HCT116 (cell line): ENCODE measurements at regions of chr14 and their contacts with region 1.

Region 1: GRCh38 chr14:59055439-59056045 is 132.9 kb upstream of the DAAM1 start:
- DNase-seq: peak; percentile 13
- ATAC-seq: peak; percentile 95
- H3K4me3 ChIP-seq: no peak overlapping the region
- H3K27ac ChIP-seq: no peak overlapping the region
- H3K4me1 ChIP-seq: no peaks in the 10 kb centered on the region
- H3K27me3 ChIP-seq: no peaks in the 10 kb centered on the region
- CTCF ChIP-seq: peak; percentile 49 to 76 (median 69); a peak in 5 of 6 replicates
- POLR2A ChIP-seq: no peak
- RAD21 ChIP-seq: peak; percentile 77

Region 2: DNA sequence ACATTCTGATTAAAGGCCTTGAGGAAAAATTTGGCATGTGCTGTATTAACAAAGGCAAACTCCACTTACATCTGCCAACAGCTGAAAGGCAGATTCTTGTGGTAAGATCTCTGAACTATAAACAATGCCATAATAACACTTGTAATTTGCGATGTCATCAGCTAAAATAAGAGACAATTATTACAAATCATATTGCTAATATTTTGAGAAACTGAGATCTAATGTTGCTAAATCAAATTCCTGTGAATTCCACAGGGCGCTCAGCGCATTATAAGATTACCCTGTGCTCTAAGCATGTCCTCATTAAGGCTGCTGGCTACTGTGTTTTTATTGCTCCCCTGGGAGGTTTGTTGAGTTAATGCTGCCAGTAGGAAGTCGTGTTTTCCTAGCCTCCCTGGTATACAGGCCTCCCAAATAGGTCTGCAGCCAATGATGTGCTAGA is 172.9 kb before region 1 on chr14:
- CTCF ChIA-PET with region 1: no interaction called
- POLR2A ChIA-PET with region 1: no interaction called
- RAD21 ChIA-PET with region 1: no interaction called
- intact Hi-C with region 1: no loop called
- DNase-seq: no peak
- ATAC-seq: no peak
- H3K4me3 ChIP-seq: no peak overlapping the region
- H3K27ac ChIP-seq: no peak overlapping the region
- H3K4me1 ChIP-seq: peaks cover 3 to 7% of the 10 kb centered on the region in 2 experiments; a peak in 3 of 4 replicates
- H3K27me3 ChIP-seq: no peaks in the 10 kb centered on the region
- CTCF ChIP-seq: no peak
- POLR2A ChIP-seq: no peak
- RAD21 ChIP-seq: no peak

Region 3: DNA sequence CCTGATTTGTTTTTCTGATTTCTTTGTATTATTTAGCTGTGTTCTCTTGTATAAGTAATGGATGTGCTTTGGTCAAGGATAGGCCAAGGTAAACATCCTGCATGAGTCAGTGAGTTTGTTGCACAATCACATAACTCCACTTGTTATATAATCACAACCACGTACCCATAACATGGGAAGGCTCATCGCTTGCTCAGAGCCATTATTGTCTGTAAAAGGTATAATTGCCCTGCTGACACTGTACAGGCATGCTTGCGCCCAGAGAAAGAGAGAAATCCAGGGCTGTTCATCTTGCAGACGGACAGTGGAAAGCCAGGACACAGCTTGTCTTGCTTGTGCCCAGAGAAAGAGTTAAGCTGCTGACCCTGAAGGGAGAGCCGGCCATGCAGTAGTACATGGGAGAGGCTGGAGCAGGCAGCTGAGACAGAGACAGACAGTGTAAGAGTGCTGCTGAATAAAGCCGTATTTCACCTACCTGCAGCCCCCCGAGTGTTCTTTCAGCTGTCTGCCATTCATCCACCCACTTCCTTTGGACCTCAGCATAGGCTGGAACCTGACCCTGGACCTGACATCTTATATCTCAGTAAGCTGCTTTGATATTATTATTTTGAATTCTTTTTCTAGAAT is 41.8 kb before region 1 on chr14:
- CTCF ChIA-PET with region 1: no interaction called
- POLR2A ChIA-PET with region 1: no interaction called
- RAD21 ChIA-PET with region 1: no interaction called
- intact Hi-C with region 1: no loop called
- DNase-seq: no peak
- ATAC-seq: no peak
- H3K4me3 ChIP-seq: no peak overlapping the region
- H3K27ac ChIP-seq: no peak overlapping the region
- H3K4me1 ChIP-seq: no peaks in the 10 kb centered on the region
- H3K27me3 ChIP-seq: no peaks in the 10 kb centered on the region
- CTCF ChIP-seq: no peak
- POLR2A ChIP-seq: no peak
- RAD21 ChIP-seq: no peak

Region 4: GRCh38 chr14:59028476-59029202 is 26.9 kb before region 1 on chr14:
- CTCF ChIA-PET with region 1: interaction called, 4 read pairs
- POLR2A ChIA-PET with region 1: no interaction called
- RAD21 ChIA-PET with region 1: no interaction called
- intact Hi-C with region 1: loop called (anchors 2 kb)
- DNase-seq: peak; percentile 68
- ATAC-seq: peak; percentile 98
- H3K4me3 ChIP-seq: peak overlapping the region in 1 of 2 experiments; percentile 14; a peak in 1 of 4 replicates
- H3K27ac ChIP-seq: no peak overlapping the region
- H3K4me1 ChIP-seq: peaks cover 0 to 9% of the 10 kb centered on the region in 2 experiments; a peak in 2 of 4 replicates
- H3K27me3 ChIP-seq: no peaks in the 10 kb centered on the region
- CTCF ChIP-seq: peak; percentile 80 to 93 (median 90)
- POLR2A ChIP-seq: no peak
- RAD21 ChIP-seq: peak; percentile 91

Region 5: DNA sequence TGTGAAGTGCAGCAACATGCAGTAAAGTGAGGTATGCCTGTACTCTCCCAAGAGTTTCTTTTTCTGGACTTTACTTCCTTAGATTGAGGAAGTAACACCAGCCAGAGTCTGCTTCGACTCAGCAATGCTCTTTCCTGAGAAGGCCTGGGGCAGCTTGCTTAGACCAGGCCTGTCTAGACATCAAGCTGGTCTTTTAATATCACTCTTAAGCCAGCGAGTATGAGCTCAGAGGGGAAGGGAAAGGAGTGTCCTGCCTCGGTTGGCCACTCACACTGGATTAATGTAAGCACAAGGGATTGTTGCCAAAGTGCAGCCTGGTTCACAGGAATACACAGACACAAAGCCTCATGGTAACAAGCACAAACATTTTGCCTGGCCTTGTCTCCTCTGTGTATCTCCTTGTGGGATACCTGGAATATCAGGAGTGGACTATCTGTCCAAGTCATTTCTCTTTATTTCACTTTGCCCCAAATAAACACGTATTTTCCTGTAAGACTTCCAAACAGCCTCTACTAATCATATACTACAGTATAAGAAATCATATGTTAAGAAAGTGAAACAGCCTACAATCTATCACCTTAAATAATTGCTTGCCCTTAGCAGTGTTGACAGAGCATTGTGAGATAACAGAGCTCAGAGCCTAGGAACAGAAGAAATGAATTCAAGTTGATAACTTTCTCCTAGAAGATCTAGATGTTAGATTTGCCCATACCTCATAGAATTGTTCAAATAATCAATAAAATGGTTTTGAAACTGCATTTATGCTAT is 11.8 kb after region 1 on chr14:
- CTCF ChIA-PET with region 1: no interaction called
- POLR2A ChIA-PET with region 1: no interaction called
- RAD21 ChIA-PET with region 1: no interaction called
- intact Hi-C with region 1: no loop called
- DNase-seq: no peak
- ATAC-seq: no peak
- H3K4me3 ChIP-seq: no peak overlapping the region
- H3K27ac ChIP-seq: no peak overlapping the region
- H3K4me1 ChIP-seq: no peaks in the 10 kb centered on the region
- H3K27me3 ChIP-seq: no peaks in the 10 kb centered on the region
- CTCF ChIP-seq: no peak
- POLR2A ChIP-seq: no peak
- RAD21 ChIP-seq: no peak

Region 6: GRCh38 chr14:59140106-59140843 is 84.7 kb after region 1 on chr14:
- CTCF ChIA-PET with region 1: no interaction called
- POLR2A ChIA-PET with region 1: no interaction called
- RAD21 ChIA-PET with region 1: no interaction called
- intact Hi-C with region 1: no loop called
- DNase-seq: no peak
- ATAC-seq: no peak
- H3K4me3 ChIP-seq: no peak overlapping the region
- H3K27ac ChIP-seq: no peak overlapping the region
- H3K4me1 ChIP-seq: no peaks in the 10 kb centered on the region
- H3K27me3 ChIP-seq: no peaks in the 10 kb centered on the region
- CTCF ChIP-seq: no peak
- POLR2A ChIP-seq: no peak
- RAD21 ChIP-seq: no peak